Aorta (tissue), 5 donors: ENCODE measurements at regions of chr10 and their contacts with region 1.

Region 1: GRCh38 chr10:123559066-123559822 is 106.9 kb upstream of the GPR26 start:
- DNase-seq: peak; percentile 78 to 89
- ATAC-seq: peak; percentile 86
- H3K4me3 ChIP-seq: no peak overlapping the region
- H3K27ac ChIP-seq: no peak overlapping the region
- H3K4me1 ChIP-seq: no peaks in the 10 kb centered on the region
- H3K27me3 ChIP-seq: no peaks in the 10 kb centered on the region

Region 2: GRCh38 chr10:123043409-123043925 is 515.8 kb before region 1 on chr10:
- intact Hi-C with region 1: loop called (anchors 2 to 5 kb)
- DNase-seq: no peak
- ATAC-seq: no peak
- H3K4me3 ChIP-seq: no peak overlapping the region
- H3K27ac ChIP-seq: no peak overlapping the region
- H3K4me1 ChIP-seq: no peaks in the 10 kb centered on the region
- H3K27me3 ChIP-seq: no peaks in the 10 kb centered on the region

Region 3: GRCh38 chr10:123132576-123133477 is 426.4 kb before region 1 on chr10:
- intact Hi-C with region 1: loop called (anchors 1 to 5 kb)
- DNase-seq: peak; percentile 89 to 94
- ATAC-seq: peak; percentile 84
- H3K4me3 ChIP-seq: no peak overlapping the region
- H3K27ac ChIP-seq: no peak overlapping the region
- H3K4me1 ChIP-seq: no peaks in the 10 kb centered on the region
- H3K27me3 ChIP-seq: peaks cover 0 to 5% of the 10 kb centered on the region in 2 donors

Region 4: GRCh38 chr10:123588386-123588914 is 29.2 kb after region 1 on chr10:
- intact Hi-C with region 1: no loop called
- DNase-seq: no peak
- ATAC-seq: no peak
- H3K4me3 ChIP-seq: no peak overlapping the region
- H3K27ac ChIP-seq: no peak overlapping the region
- H3K4me1 ChIP-seq: no peaks in the 10 kb centered on the region
- H3K27me3 ChIP-seq: no peaks in the 10 kb centered on the region